ENCODE measurements at regions of chr7 and their contacts with region 1.

Region 1: DNA sequence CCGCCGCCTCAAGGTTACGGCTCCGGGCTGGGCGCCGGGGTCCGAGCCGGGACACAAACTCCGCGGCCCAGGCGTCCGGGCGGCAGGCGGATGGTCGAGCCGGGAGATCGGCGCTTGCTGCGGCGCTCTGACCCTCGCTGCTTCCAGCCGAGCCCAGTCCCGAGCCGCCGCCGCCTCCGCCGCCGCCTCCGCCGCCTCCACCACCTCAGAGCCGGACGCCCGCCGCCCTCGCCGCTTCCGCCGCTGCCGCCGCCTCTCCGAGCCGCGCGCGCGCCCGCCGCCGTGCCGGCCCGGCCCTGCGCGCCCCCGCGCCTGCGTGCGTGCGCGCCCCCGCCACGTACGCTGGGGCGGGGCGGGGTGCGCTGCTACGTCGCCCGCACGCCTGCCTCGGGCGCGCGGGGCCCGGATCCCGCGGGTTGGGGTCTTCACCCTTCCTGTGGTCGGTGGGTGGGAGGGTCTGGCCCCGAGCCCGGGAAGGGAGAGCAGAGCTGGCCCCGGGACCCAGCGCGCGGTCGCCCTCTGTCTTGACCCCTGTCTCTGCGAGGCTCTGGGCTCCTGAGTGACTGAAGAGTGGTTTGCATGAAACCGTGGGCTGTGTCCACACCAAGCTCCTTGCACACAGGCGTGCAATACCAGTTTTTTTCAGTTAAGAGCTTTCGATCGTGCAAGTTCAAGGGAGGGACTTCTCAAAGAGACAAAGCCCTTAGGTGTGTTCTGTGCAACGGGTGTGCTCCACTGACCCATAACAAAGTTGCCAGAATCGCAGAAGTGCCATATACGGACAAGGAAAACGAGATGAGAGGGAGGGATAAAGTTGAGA is at the start of gene SMURF1:
- DNase-seq: peak; percentile 58 to 80 (median 70)
- H3K4me3 ChIP-seq: peak within 1 kb of the TSS in 3 of 4 donors; percentile 54 to 98 (median 96)
- H3K27ac ChIP-seq: peak within 1 kb of the TSS; percentile 73 to 100 (median 96)
- H3K4me1 ChIP-seq: peaks cover 16 to 36% of the 10 kb centered on the region in 2 donors
- H3K27me3 ChIP-seq: no peaks in the 10 kb centered on the region
- CTCF ChIP-seq: peak in 2 of 6 experiments; percentile 10 to 15
- POLR2A ChIP-seq: peak; percentile 67
- total RNA-seq, gene SMURF1: 16.7 to 40.3 (median 23.2) TPM

Region 2: GRCh38 chr7:99040104-99040958 is 103.7 kb before region 1 on chr7:
- intact Hi-C with region 1: loop called (anchors 5 to 10 kb)
- DNase-seq: peak; percentile 88 to 95 (median 93)
- H3K4me3 ChIP-seq: no peak overlapping the region
- H3K27ac ChIP-seq: peak overlapping the region in 4 of 5 donors; percentile 53 to 90 (median 69)
- H3K4me1 ChIP-seq: peaks cover 0 to 43% of the 10 kb centered on the region in 2 donors
- H3K27me3 ChIP-seq: no peaks in the 10 kb centered on the region
- CTCF ChIP-seq: peak; percentile 65 to 88 (median 84)
- POLR2A ChIP-seq: peak in 1 of 2 donors; percentile 39

Region 3: DNA sequence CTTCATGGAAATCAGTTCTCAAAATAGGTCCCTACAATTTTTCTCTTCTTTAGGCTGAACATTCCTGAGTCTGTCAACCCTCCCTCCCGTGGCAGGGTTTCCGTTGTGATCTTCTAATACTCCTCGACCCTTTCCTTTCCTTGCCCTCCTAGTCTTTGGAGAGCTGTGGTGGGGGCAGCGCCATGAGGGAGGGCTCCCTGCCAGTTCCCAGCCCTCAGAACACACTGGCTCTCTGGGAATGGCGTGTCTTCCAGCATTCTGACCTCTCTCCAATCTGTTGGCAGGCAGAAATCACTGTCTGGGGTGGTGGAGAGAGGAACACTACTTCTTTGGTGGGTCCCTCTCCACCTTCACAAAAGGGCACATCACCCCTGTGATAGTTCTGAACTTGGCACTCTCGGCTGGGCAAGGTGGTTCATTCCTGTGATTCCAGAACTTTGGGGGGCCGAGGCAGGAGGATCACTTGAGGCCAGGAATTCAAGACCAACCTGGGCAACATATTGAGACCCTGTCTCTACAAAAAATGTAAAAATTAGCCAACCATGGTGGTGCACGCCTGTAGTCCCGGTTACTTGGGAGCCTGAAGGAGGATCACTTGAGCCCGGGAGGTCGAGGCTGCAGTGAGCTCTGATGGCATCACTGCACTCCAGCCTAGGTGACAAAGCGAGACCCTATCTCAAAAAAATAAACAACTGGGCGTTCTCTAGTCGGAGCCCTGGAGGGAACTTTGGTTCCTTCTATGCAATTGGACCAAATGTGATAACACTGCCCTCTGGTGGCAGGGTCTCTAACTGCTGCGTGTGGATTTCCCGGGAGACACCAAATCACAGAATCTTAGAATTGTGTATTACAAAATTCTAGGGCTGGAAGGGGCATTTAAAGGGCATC is 168.5 kb after region 1 on chr7:
- intact Hi-C with region 1: loop called in 1 of 2 experiments (anchors 5 kb)
- DNase-seq: peak; percentile 60 to 91 (median 76)
- H3K4me3 ChIP-seq: peak overlapping the region in 1 of 4 donors; percentile 33
- H3K27ac ChIP-seq: no peak overlapping the region
- H3K4me1 ChIP-seq: peaks cover 8 to 11% of the 10 kb centered on the region in 2 donors
- H3K27me3 ChIP-seq: no peaks in the 10 kb centered on the region
- CTCF ChIP-seq: peak; percentile 82 to 94 (median 88)
- POLR2A ChIP-seq: no peak

Region 4: GRCh38 chr7:99325545-99326407 is 181.7 kb after region 1 on chr7 and contains the start of gene ARPC1A:
- intact Hi-C with region 1: loop called in 1 of 2 experiments (anchors 10 kb)
- DNase-seq: peak; percentile 90 to 95 (median 90)
- H3K4me3 ChIP-seq: peak within 1 kb of the TSS; percentile 43 to 99 (median 82)
- H3K27ac ChIP-seq: peak within 1 kb of the TSS in 4 of 5 donors; percentile 75 to 84 (median 81)
- H3K4me1 ChIP-seq: peaks cover 29 to 50% of the 10 kb centered on the region in 2 donors
- H3K27me3 ChIP-seq: no peaks in the 10 kb centered on the region
- CTCF ChIP-seq: peak in 5 of 6 experiments; percentile 16 to 53 (median 38)
- POLR2A ChIP-seq: peak; percentile 32 to 73
- total RNA-seq, gene ARPC1A: 118 to 173 (median 134) TPM

Measured in adrenal gland (tissue), 19 donors.